GM10248 (cell line): ENCODE measurements at regions of chr15 and their contacts with region 1.

Region 1: GRCh38 chr15:57861036-57861638 is 154.6 kb downstream of the POLR2M start:
- DNase-seq: peak; percentile 36
- CTCF ChIP-seq: peak; percentile 75

Region 2: DNA sequence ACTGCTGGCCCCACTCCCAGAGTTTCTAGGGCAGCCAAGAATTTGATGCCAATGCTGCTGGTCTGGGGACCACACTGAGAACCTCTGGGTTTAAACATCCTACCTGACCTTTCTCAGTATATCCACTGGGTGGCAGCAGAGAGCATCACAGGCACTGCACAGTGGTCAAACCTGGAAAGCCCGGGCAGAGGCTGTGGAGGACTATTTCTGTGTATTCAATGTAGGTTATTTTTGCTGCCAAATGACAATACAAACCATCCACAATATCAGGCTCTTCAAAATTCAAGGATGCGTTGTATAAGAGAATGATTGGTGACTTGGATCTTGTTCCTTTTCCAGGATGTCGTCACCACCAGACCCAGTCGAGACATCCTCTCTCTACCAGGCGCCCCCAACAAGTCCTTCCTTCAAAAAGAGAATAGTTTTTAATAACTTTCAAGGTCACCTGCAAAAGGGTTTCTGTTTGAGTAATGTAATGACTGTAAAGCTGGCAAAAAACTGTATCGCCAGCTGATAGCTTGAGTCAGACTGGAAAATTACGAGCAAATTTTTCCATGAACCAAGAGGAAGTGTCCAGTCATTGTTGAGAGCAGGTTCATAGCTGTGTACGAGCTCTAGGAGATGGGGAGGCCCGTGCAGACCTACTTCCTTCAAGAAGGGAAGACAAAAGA is 300.0 kb before region 1 on chr15:
- CTCF ChIA-PET with region 1: interaction called, 19 read pairs
- POLR2A ChIA-PET with region 1: no interaction called
- DNase-seq: peak; percentile 72
- CTCF ChIP-seq: peak; percentile 78

Region 3: GRCh38 chr15:57675481-57676181 is 185.5 kb before region 1 on chr15:
- CTCF ChIA-PET with region 1: no interaction called
- POLR2A ChIA-PET with region 1: no interaction called
- DNase-seq: no peak
- CTCF ChIP-seq: no peak

Region 4: GRCh38 chr15:57743424-57743823 is 117.7 kb before region 1 on chr15:
- CTCF ChIA-PET with region 1: interaction called, 25 read pairs
- POLR2A ChIA-PET with region 1: no interaction called
- DNase-seq: no peak
- CTCF ChIP-seq: peak; percentile 30

Region 5: DNA sequence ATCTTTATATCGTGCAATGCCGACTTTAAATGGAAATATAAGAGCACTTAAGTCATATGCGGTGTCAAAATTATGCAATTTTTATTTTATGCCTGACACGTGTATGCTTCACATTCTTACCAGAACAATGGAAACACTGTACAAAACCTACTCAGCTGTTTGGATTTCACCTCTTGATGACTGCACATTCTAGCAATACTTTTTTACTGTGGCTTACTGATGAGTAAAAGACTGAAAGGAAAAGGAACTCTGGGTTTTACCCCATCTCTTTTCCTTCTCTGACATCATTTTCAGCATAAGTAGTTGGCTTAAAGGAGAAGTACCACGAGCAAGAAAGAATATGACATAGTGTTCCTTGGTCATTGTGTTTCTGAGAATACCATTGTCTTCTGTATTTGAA is 11.8 kb before region 1 on chr15:
- CTCF ChIA-PET with region 1: interaction called, 42 read pairs
- POLR2A ChIA-PET with region 1: no interaction called
- DNase-seq: no peak
- CTCF ChIP-seq: no peak

Region 6: DNA sequence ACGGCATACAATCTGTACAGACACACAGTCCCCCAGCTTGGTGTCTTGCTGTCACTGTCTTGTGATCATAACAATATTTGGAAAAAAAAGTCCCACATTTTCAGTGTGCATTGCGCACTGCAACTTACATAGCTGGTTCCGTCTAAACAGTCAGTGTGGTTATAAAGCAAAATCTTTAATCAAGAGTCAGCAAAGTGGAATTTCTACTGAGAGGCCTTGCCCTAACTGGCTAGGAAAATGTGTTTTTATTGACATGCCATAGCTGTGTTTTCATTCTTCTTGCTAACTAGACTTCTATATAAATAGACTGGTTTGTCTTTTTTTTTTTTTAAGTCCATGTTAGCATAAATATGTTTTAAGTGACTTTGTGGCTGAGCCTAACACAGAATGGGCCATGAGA is 20.2 kb after region 1 on chr15:
- CTCF ChIA-PET with region 1: interaction called, 22 read pairs
- POLR2A ChIA-PET with region 1: no interaction called
- DNase-seq: no peak
- CTCF ChIP-seq: no peak

Region 7: DNA sequence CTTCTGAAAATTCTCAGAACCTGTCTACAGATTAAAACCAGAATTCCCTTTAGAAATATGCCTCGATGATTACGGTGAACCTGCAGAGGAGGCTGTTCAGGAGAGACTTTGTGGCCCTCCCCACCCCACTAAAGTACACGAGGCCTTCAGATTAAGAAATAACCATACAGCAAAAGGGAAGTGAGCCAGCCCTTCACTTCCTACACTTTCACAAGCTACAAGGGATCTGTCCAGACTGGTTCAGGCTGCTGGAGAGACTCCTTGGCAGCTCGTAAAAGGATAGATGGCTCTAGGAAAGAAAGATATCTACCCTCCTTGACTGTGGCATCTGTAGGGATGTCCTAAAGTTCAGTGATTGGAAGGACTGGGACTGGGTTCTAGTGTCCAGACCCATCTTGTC is 101.8 kb after region 1 on chr15:
- CTCF ChIA-PET with region 1: no interaction called
- POLR2A ChIA-PET with region 1: no interaction called
- DNase-seq: no peak
- CTCF ChIP-seq: no peak